Common myeloid progenitor, CD34-positive (primary cell): ENCODE measurements at regions of chr18 and their contacts with region 1.

Region 1: DNA sequence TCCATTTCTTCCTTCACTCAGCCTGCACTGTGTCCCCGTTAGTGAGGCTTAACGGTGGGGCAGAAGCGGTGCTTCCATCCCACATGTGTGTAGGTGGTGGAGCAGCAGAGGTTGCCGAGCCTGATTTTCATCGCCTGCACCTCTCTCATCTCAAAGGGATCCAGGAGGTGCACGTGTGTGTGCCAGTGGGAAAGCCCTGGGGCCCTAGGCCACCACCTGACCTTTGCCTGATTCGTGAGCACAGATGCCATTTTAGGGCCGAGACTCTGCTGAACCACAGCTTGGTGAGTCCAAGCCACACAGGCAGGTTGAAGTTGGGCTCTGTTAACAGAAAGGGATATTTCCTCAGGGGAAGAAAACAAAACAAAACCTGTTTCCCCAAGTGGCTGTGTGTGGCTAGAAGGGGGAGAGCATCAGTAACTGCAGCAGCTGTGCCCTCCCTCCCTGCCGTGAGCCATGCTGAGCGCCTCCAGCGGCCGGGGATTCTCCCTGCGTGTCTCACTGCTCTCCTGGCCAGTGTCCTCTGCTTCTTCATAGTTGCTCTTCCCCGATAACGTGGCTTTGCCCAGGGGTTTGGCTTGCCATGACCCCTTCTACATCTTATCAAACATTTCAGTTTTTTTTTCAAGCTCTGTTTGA is 81.5 kb downstream of the MAPRE2 start:
- DNase-seq: peak in 2 of 3 donors; percentile 75 to 79
- H3K4me3 ChIP-seq: peak overlapping the region in 1 of 7 experiments; percentile 0
- H3K27ac ChIP-seq: peak overlapping the region in 1 of 2 experiments; percentile 54
- H3K4me1 ChIP-seq: peaks cover 0 to 36% (median 18%) of the 10 kb centered on the region in 4 experiments
- H3K27me3 ChIP-seq: no peaks in the 10 kb centered on the region

Region 2: DNA sequence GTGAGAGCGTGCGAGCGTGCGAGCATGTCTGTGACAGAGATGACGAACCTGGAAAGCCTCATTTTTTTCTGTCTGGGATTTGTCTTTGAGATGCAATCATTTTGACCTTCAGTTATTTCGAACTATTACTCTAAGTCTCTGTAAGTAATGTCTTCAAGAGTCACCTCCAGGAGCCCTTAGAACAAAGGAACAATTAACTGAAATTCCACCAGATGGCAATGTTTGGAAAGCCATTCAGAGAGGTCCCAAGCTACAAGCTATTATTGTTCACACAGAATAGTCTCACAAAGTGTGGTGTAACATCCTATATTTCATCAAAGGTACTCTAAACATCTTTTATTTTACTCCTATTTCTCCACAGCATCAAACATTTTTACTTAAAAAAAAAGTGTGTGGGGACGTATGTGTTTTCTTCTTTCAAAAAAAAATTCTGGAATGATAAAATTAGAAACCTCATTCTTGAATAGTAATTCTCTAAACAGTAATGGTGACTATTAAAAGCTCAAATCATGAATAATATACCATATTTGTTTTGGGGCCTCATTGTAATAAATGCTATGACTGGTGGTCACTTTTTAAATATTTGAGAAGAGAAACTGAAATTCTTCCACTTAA is 116.6 kb before region 1 on chr18:
- CTCF ChIA-PET with region 1: interaction called, 10 read pairs
- POLR2A ChIA-PET with region 1: no interaction called
- DNase-seq: peak; percentile 71 to 83 (median 76)
- H3K4me3 ChIP-seq: no peak overlapping the region
- H3K27ac ChIP-seq: no peak overlapping the region
- H3K4me1 ChIP-seq: no peaks in the 10 kb centered on the region
- H3K27me3 ChIP-seq: no peaks in the 10 kb centered on the region

Region 3: DNA sequence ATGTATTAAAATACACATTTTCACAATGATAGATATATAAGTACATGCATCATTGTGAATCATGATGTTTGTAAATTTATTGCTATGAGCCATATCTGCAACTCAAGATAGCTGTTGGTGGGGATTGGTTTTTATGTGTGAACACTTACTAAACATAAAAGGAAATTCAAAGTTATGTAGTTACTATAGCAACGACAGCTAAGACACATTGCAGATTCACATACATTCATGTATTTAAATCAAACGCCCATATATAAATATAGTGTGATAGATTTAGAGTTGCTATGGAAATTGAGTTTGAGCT is 15.9 kb before region 1 on chr18:
- CTCF ChIA-PET with region 1: interaction called, 10 read pairs
- POLR2A ChIA-PET with region 1: interaction called, 3 read pairs
- DNase-seq: peak; percentile 52 to 91 (median 83)
- H3K4me3 ChIP-seq: no peak overlapping the region
- H3K27ac ChIP-seq: peak overlapping the region; percentile 81 to 82
- H3K4me1 ChIP-seq: peaks cover 0 to 35% (median 13%) of the 10 kb centered on the region in 4 experiments
- H3K27me3 ChIP-seq: no peaks in the 10 kb centered on the region